Mammary epithelial cell (primary cell): ENCODE measurements at regions of chr12 and their contacts with region 1.

Region 1: DNA sequence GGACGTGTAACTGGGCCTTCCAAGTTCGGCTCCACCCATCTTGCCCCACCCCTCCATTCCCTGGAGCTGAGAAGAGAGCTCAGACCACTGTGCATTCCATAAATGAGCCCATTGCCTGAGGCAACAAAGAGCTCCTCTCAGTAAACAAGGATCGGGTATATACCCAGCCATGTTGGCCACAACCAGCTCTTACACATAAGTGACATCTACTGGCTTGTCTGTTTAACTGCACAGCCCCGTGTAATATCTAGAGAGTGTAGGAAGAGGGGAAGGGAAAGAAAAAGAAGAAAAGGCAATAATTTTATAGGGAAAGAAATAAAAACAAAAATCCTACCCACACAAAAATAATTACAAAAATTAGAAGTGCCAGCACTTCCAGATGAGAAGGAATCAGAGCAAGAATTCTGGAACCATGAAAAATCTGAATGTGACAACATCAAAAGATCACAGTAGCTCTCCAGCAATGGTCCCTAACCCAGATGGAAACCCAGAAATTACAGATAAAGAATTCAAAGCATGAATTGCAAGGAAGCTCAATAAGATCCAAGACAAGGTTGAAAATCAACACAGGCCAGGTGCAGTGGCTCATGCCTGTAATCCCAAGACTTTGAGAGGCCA is 308.1 kb downstream of the RPAP3 start:
- DNase-seq: peak; percentile 74
- H3K4me3 ChIP-seq: no peak overlapping the region
- H3K27ac ChIP-seq: no peak overlapping the region
- H3K4me1 ChIP-seq: peaks cover 17% of the 10 kb centered on the region
- H3K27me3 ChIP-seq: no peaks in the 10 kb centered on the region
- CTCF ChIP-seq: peak; percentile 77 to 83

Region 2: DNA sequence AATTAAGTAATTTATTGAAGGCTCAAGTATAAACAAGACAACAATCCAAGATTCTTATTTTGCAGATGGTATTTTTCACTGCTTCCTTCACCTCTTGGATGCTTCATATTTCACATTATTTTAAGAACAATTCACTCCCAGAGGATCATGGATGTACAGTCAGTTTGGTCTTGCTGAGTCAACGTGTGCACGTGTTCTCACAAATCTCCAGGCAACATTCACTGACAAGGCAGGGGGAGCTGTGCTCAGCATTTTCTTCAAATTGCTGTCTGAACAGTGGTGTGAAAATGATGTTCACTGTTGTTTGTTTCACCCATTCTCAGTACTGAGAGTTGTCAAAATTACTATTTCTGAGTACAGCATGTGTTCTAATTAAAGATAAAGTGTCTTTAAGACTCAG is 453.7 kb before region 1 on chr12:
- CTCF ChIA-PET with region 1: no interaction called
- dilution Hi-C with region 1: no loop called
- in situ Hi-C with region 1: no loop called
- intact Hi-C with region 1: loop called (anchors 2 kb)
- DNase-seq: peak; percentile 70
- H3K4me3 ChIP-seq: no peak overlapping the region
- H3K27ac ChIP-seq: no peak overlapping the region
- H3K4me1 ChIP-seq: peaks cover 20% of the 10 kb centered on the region
- H3K27me3 ChIP-seq: no peaks in the 10 kb centered on the region
- CTCF ChIP-seq: peak in 1 of 2 donors; percentile 58

Region 3: GRCh38 chr12:47190271-47190750 is 207.5 kb before region 1 on chr12:
- CTCF ChIA-PET with region 1: no interaction called
- dilution Hi-C with region 1: no loop called
- in situ Hi-C with region 1: no loop called
- intact Hi-C with region 1: loop called (anchors 5 kb)
- DNase-seq: peak; percentile 80
- H3K4me3 ChIP-seq: no peak overlapping the region
- H3K27ac ChIP-seq: no peak overlapping the region
- H3K4me1 ChIP-seq: peaks cover 21% of the 10 kb centered on the region
- H3K27me3 ChIP-seq: no peaks in the 10 kb centered on the region
- CTCF ChIP-seq: no peak

Region 4: GRCh38 chr12:47270782-47271664 is 126.8 kb before region 1 on chr12:
- CTCF ChIA-PET with region 1: no interaction called
- dilution Hi-C with region 1: no loop called
- in situ Hi-C with region 1: no loop called
- intact Hi-C with region 1: loop called (anchors 2 kb)
- DNase-seq: peak; percentile 97
- H3K4me3 ChIP-seq: no peak overlapping the region
- H3K27ac ChIP-seq: peak overlapping the region; percentile 99
- H3K4me1 ChIP-seq: peaks cover 68% of the 10 kb centered on the region
- H3K27me3 ChIP-seq: no peaks in the 10 kb centered on the region
- CTCF ChIP-seq: no peak

Region 5: DNA sequence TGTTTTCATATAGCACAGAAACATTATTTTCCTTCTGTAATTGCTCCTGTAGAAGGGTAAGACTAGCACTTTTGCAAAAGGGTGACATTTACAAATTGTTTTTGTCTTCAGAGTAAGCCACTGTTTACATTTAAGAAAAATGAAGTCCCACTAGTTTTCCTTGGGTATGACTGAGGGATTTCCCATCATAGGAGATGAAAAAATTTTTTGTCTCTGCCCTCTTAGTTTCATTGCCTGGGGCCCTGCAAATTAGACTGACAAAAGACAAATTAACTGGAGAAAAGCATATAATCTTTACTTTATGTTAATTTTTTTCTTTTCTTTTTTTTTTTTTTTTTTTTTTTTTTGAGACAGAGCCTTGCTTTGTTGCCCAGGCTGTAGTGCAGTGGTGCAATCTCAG is 16.6 kb before region 1 on chr12:
- CTCF ChIA-PET with region 1: interaction called, 25 read pairs
- dilution Hi-C with region 1: no loop called
- in situ Hi-C with region 1: no loop called
- intact Hi-C with region 1: no loop called
- DNase-seq: no peak
- H3K4me3 ChIP-seq: no peak overlapping the region
- H3K27ac ChIP-seq: no peak overlapping the region
- H3K4me1 ChIP-seq: peaks cover 9% of the 10 kb centered on the region
- H3K27me3 ChIP-seq: no peaks in the 10 kb centered on the region
- CTCF ChIP-seq: no peak

Region 6: GRCh38 chr12:47686645-47687240 is 289.0 kb after region 1 on chr12:
- CTCF ChIA-PET with region 1: no interaction called
- dilution Hi-C with region 1: no loop called
- in situ Hi-C with region 1: no loop called
- intact Hi-C with region 1: loop called (anchors 2 kb)
- DNase-seq: peak; percentile 5
- H3K4me3 ChIP-seq: no peak overlapping the region
- H3K27ac ChIP-seq: no peak overlapping the region
- H3K4me1 ChIP-seq: no peaks in the 10 kb centered on the region
- H3K27me3 ChIP-seq: no peaks in the 10 kb centered on the region
- CTCF ChIP-seq: peak; percentile 54 to 79